ENCODE measurements at regions of chr2 and their contacts with region 1.

Region 1: DNA sequence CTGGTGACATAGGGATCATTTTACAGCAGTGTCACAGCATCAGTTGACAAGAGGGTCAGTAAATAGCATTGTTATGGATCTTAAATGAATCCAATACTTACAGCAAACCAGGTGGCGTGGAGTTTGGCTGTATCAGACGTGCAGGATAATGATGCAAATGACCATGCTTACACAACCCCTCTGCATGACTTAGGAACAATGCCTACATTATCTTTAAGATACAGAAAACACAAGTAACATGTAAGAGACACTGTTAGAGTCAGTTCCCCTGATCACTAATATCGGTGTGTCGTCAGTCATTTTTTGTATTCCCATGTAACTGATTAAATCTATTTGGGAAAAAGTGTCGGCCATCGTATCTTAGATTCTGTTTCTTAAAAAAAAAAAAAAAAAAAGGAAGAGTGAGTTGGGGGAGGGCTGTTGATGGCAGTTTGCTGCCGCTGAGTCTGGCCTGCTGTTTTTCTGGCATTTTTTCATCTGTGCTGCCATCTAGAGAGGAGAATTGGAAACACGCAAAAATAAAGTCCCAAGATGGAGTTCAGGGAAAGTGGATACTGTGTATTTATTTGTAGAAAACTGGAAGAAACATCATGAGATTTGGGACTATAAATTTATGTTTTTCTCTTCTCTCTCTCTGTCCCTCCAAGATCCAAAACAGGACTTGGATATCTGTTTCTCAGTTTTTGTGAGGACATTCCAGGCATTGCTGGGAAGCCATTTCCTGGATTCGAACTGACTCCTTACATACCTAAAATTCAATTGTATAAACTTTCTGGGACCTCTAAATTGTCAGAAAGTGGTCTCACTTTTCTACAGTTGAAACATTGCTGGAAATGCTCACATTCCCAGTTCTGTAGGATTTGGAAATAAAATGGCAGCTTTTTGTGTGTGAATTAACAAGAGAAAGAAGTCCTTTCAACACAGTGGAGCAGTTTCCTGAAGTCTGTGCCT is 60.3 kb upstream of the AGPS start:
- DNase-seq: peak in 1 of 2 donors; percentile 36
- H3K4me3 ChIP-seq: peak overlapping the region; percentile 5 to 13
- H3K27ac ChIP-seq: peak overlapping the region; percentile 62 to 68
- H3K4me1 ChIP-seq: peaks cover 0 to 11% (median 2%) of the 10 kb centered on the region in 4 donors
- H3K27me3 ChIP-seq: no peaks in the 10 kb centered on the region
- CTCF ChIP-seq: peak; percentile 50 to 77

Region 2: DNA sequence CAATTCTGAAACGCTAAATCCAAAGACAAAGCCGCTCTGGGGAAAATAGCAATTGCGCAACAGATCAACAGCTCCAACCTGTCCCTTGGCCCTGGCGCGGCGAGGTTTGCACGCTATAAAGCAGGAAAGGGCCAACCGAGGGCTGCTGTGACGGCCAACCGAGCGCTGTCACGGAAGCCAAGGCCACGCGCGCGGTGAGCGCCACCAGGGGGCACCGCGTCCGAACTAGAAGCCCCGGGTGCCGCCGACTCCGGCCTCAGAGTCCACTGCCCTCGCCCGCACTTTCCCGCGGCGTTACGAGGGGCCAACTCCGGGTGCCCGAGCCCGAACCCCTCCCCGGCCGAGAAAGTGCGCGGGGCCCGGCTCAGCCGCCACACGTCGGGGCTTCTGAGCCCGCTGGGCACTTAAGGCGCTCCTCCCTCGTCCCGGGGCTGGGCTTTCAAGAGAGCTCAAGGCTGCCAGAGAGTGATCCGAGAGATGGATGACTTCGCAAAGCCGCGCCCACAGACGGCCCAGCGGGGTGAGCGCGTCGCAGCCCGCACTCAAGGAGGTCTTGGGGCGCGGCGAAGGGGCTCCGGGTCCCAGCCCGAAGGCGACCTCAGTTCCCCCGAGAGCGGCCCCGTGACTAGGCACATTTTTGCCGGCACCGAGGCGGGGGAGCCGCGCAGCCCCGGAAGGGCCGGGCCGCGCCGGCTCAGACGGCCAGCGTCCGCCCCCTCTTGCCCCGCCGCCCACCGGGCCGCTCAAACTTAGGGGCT is 68.7 kb before region 1 on chr2:
- intact Hi-C with region 1: loop called (anchors 5 kb)
- DNase-seq: peak; percentile 99
- H3K4me3 ChIP-seq: peak overlapping the region; percentile 70 to 99
- H3K27ac ChIP-seq: peak overlapping the region; percentile 99 to 100
- H3K4me1 ChIP-seq: peaks cover 0 to 53% (median 30%) of the 10 kb centered on the region in 4 donors
- H3K27me3 ChIP-seq: no peaks in the 10 kb centered on the region
- CTCF ChIP-seq: peak; percentile 89 to 91

Region 3: GRCh38 chr2:177419274-177419673 is 87.0 kb after region 1 on chr2:
- intact Hi-C with region 1: loop called (anchors 10 kb)
- DNase-seq: no peak
- H3K4me3 ChIP-seq: no peak overlapping the region
- H3K27ac ChIP-seq: no peak overlapping the region
- H3K4me1 ChIP-seq: peaks cover 0 to 31% (median 8%) of the 10 kb centered on the region in 4 donors
- H3K27me3 ChIP-seq: no peaks in the 10 kb centered on the region
- CTCF ChIP-seq: no peak

Region 4: DNA sequence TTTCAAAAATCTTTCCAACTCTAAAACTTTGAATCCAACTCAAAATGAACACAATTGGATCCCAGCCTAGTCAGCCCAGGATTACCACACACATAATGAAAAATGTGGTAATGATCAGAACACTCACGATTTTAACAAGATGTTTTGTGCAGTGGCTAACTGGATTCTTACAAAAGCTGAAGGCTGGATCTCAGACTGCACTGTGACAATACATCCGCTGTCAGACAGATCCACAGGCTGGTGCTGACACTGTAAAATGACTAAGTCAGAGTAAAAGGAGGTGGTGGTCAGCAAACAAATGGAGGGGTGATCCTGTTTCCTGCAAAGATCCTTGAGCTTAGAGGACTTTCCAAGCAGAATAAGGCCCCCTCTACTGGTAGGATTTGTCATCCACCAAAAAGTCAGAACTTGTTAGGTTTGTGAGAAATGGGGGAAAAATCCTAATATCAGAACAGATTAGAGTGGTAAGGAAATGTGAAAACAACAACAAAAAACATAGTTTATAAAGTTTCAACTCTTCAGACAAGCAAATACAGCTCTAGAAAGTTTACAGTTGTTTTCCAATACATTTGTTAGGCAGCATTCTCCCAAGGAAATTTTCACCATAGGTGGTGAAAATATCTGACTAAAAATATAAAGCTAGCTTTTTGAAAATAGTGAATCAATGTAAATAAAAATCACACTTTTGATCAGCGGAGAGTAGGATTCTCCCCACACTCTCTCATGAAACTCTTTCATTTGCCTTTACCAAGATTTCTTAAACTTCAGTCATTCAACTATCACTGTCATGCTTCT is 272.2 kb after region 1 on chr2:
- intact Hi-C with region 1: loop called (anchors 5 kb)
- DNase-seq: peak in 1 of 2 donors; percentile 36
- H3K4me3 ChIP-seq: no peak overlapping the region
- H3K27ac ChIP-seq: no peak overlapping the region
- H3K4me1 ChIP-seq: peaks cover 0 to 2% (median 0%) of the 10 kb centered on the region in 4 donors
- H3K27me3 ChIP-seq: no peaks in the 10 kb centered on the region
- CTCF ChIP-seq: peak; percentile 45 to 53

Measured in tibial artery (tissue), 4 donors.